Activated B cell treated with CpG ODN at 0.5 μM for 24 hours (primary cell): ENCODE measurements at regions of chr3 and their contacts with region 1.

Region 1: GRCh38 chr3:100089812-100090668 is 24.3 kb downstream of the FILIP1L start:
- DNase-seq: no peak
- ATAC-seq: peak; percentile 56
- H3K4me3 Mint-ChIP-seq: no peak overlapping the region
- H3K27ac Mint-ChIP-seq: no peak overlapping the region
- H3K4me1 Mint-ChIP-seq: peaks cover 6% of the 10 kb centered on the region
- H3K27me3 Mint-ChIP-seq: no peaks in the 10 kb centered on the region
- CTCF ChIP-seq: no peak

Region 2: DNA sequence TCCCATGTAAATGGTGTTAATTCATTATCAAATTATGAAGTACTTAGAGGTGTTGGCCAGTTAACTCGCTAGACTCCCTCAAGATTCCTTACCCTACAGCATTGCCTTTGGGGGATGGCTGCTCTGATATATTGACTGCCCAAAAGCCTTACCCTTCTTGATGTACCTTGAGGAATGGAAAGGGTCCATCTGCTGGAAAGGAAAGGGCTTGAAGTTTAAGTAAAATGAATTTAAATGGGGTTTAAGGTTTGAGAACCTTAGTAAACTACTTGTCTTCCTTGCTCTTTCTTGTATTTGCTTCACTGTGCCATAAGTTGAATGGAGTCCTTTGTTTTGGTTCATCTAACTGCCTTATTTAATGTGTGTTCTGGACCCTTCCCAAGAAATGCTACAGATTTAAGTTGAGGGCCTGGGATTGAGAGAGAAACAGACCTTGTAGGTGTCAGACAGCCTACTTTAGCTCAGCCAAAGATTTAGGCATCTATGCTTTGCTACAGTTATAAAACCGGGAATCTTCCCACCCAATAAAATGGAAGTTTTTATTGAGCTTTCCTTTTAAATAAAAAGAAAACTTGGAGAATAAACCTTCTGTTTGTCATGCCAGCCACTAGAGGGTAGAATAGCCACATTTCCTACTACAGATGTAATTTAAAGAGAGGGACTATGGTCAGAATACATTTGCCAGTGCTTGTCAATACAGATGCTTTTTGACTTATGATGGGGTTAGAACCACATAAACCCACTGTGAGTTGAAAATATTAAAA is 247.0 kb before region 1 on chr3:
- CTCF ChIA-PET with region 1: interaction called, 4 read pairs
- POLR2A ChIA-PET with region 1: no interaction called
- intact Hi-C with region 1: loop called (anchors 1 kb)
- DNase-seq: no peak
- ATAC-seq: peak; percentile 37
- H3K4me3 Mint-ChIP-seq: no peak overlapping the region
- H3K27ac Mint-ChIP-seq: no peak overlapping the region
- H3K4me1 Mint-ChIP-seq: peaks cover 21% of the 10 kb centered on the region
- H3K27me3 Mint-ChIP-seq: no peaks in the 10 kb centered on the region
- CTCF ChIP-seq: no peak